Activated T-helper 2 cell treated with anti-CD3 and anti-CD28 coated beads, Interferon-gamma antibody, Interleukin-2, Interleukin-4, amounts not matched to agents 10 μg/mL and 5 μg/mL and 100 μg/mL, durations not matched to agents 14 hours and 24 hours and 36 hours (primary cell): ENCODE measurements at regions of chr12 and their contacts with region 1.

Region 1: GRCh38 chr12:99352269-99352668 is 295.3 kb upstream of the GARIN6 start:
- DNase-seq: no peak
- H3K4me3 Mint-ChIP-seq: no peak overlapping the region
- H3K27ac Mint-ChIP-seq: no peak overlapping the region
- H3K4me1 Mint-ChIP-seq: no peaks in the 10 kb centered on the region
- H3K27me3 Mint-ChIP-seq: no peaks in the 10 kb centered on the region

Region 2: DNA sequence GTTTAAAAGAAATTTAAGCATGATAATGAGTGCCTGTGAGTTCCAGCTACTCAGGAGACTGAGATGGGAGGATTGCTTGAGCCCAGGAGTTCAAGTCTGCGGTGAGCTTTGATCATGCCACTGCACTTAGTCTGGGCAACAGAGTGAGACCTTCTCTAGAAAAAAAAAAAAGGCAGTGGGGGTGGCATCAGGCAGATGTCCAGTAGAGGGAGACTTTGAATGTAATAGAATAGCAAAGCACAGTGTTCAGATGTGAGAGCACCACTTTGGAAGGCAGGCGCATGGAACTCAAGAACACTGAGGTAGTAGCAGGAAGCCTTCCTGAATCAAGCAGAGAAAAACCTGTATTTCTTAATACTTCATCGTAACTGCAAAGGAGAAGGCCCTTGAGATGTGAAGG is 99.2 kb before region 1 on chr12:
- intact Hi-C with region 1: no loop called
- DNase-seq: no peak
- H3K4me3 Mint-ChIP-seq: no peak overlapping the region
- H3K27ac Mint-ChIP-seq: no peak overlapping the region
- H3K4me1 Mint-ChIP-seq: no peaks in the 10 kb centered on the region
- H3K27me3 Mint-ChIP-seq: no peaks in the 10 kb centered on the region

Region 3: DNA sequence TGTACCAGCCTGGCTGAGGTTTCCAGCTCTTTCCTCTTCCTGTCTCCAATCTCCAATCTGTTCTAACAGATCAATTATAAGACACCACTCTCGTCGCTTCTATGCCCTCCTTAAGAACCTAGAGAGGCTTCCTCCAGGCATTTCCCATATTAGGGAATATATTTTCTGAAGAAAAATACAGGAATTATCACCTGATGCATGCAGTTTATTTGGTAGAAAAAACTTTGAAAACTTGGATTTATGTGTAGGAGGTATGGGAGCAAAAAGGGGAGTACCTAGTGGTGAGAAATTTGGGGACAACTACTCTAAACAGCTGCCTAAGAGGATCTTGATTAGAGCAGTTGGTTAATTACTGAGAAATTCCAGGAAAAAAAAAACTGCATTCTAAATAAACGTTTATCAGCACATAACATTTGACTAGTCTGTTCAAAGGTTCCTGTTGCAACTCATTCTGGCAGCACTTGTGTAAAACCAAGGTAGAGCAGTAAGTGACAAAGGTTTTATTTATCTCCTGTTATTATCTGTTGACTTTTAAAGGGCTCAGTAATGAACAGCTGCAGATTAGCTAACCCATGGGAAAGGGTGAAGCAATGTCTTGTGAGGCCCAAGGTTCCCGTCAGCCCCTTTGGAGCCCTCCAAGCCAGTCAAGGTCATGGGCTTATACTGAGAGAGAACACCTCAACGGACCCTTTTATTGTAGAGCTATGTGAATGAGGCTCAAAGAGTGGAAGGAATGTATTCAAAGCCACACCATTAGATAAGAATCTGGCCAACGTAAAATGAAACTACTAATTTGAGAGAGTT is 1085.0 kb after region 1 on chr12:
- intact Hi-C with region 1: loop called (anchors 10 kb)
- DNase-seq: no peak
- H3K4me3 Mint-ChIP-seq: no peak overlapping the region
- H3K27ac Mint-ChIP-seq: peak overlapping the region; percentile 34
- H3K4me1 Mint-ChIP-seq: peaks cover 13% of the 10 kb centered on the region
- H3K27me3 Mint-ChIP-seq: peaks cover 4% of the 10 kb centered on the region